Dendritic cell treated with granulocyte-macrophage colony-stimulating factor and Interleukin-4, amounts not matched to agents 40 ng/mL and 50 ng/mL, for 4 days (primary cell): ENCODE measurements at regions of chr1 and their contacts with region 1.

Region 1: DNA sequence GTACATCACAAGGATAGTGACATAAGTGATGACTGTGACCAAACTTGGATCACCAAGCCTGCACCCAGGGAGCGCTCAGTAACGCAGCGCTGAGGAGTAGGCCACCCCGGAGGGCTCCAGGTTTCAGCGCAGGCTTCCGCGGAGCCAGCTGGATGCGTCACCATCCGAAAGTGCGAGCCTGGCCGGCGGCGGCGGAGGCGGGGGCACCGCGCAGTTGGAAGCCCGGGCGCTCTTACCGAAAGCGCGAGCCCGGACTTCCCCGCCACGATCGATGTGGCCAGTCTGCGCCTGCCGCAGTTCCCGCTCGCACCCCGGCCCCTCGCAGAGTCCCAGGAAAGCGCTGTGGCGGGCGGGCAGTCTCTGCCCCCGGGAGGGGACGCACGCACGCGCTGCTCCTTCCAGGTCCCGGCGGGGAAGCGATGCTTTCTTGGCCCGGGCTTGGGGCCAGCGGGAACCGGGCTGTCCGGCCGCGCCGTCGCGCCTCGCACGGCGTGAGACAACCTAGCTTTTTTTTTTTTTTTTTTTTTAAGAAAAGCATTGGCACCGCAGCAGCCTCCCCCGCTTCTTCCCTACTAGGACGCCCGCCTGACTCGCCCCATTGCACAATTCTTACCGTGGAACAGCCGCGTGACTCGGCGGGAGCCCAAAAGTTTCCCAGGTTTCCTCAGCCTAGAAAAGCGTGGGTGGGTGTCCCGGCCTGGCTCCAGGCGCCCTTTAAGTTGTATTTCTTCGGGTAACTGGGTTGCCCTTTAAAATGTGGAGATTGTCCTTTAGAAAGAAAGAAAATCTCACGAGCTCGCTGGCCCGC is 36.4 kb upstream of the JAK1 start:
- H3K4me3 Mint-ChIP-seq: peak overlapping the region; percentile 68
- H3K27ac Mint-ChIP-seq: peak overlapping the region; percentile 76
- H3K4me1 Mint-ChIP-seq: peaks cover 45% of the 10 kb centered on the region
- H3K27me3 Mint-ChIP-seq: no peaks in the 10 kb centered on the region

Region 2: DNA sequence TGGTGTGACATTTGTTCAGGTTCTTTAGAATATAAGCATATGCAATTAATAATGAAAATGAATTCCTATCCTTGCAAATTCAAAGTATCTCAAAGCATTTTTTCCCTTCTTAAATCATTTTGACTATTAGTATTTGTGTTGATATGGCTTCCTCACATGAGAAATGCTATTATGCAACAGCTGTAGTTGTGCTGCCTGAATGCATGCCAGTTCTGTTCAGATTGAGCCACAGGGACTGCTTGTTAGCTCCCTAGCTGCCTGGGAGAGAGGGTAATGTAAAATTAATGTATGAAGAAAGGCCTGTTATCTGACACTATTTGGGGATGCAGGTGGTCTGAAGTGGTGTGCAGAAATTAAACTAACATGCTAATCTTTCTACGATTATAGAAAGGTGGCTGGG is 487.3 kb before region 1 on chr1:
- intact Hi-C with region 1: loop called (anchors 5 kb)
- H3K4me3 Mint-ChIP-seq: no peak overlapping the region
- H3K27ac Mint-ChIP-seq: no peak overlapping the region
- H3K4me1 Mint-ChIP-seq: peaks cover 29% of the 10 kb centered on the region
- H3K27me3 Mint-ChIP-seq: no peaks in the 10 kb centered on the region

Region 3: DNA sequence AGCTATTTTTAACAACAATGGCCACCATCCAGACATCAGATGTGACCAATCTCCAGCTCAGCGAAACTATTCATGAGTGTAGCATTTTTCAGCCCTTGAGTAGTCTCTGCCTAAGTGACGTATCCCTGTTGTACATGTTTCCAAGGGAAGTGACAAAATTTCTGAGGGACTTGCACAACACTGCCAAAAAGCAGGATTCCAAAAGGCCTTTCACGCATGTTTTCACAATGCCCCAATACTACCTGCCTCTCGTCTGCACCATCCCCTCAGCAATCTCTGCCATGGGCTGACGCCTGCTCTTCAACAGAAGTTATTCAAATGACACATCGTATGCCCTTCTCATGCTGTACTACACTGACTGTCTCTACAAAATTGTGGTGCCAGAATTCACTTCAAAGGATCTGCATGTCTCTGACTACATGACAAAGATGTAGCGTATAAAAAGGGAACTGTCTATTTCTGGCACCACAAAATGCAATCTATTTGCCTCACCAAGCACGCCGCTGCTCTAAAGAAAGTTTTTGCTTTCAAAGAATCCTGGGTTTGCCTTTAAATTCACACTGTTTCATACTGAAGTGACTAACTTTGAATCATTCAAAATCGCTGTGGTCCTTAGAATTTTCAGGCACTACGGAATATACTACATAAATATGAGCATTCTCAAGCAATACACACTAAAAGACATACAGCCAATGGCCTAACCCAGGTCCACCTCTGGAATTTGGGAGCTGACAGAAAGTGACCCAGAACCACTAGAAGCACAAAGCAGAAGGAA is 69.2 kb before region 1 on chr1:
- intact Hi-C with region 1: loop called (anchors 2 kb)
- H3K4me3 Mint-ChIP-seq: peak overlapping the region; percentile 20
- H3K27ac Mint-ChIP-seq: peak overlapping the region; percentile 83
- H3K4me1 Mint-ChIP-seq: peaks cover 65% of the 10 kb centered on the region
- H3K27me3 Mint-ChIP-seq: no peaks in the 10 kb centered on the region

Region 4: GRCh38 chr1:64966158-64966971 is 36.3 kb before region 1 on chr1 and contains the start of gene JAK1:
- intact Hi-C with region 1: loop called (anchors 1 kb)
- H3K4me3 Mint-ChIP-seq: peak within 1 kb of the TSS; percentile 88
- H3K27ac Mint-ChIP-seq: peak within 1 kb of the TSS; percentile 90
- H3K4me1 Mint-ChIP-seq: peaks cover 54% of the 10 kb centered on the region
- H3K27me3 Mint-ChIP-seq: peaks cover 12% of the 10 kb centered on the region

Region 5: DNA sequence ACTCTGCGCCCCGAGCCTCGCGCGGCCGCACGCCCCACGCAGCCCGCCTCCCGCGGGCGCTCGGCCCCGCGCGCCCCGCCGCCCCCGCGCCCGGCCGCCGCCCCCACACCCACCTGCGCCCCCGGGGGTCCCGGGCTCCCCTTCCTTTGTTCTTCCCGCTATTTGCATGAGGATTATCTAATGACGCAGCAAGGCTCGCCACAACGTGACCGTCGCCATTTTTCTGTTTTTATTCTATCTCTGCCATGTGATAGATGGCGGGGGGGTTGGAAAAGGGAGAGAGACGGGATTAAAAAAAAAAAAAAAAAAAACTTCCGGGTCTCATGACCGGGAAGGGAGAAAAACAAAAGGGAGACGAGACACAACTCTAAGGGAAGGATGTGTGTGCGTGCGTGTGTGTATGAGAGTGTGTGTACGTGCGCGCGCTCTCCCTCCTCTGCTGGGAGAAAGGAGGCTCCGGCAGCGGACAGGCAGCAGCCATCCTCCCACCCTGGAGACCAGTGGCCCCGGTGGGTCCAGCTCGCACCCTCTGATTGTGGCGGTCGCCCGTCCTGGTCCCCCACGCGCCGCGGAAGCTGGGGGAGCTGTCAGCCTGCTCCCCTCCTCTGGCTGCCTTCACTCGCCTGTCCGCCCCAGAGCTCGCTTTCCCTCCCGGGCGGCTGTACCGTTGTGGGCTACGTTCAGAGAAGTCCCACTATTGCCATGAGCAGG is 64.9 kb after region 1 on chr1:
- intact Hi-C with region 1: loop called (anchors 5 kb)
- H3K4me3 Mint-ChIP-seq: peak overlapping the region; percentile 94
- H3K27ac Mint-ChIP-seq: peak overlapping the region; percentile 98
- H3K4me1 Mint-ChIP-seq: peaks cover 46% of the 10 kb centered on the region
- H3K27me3 Mint-ChIP-seq: no peaks in the 10 kb centered on the region